MCF 10A (cell line): ENCODE measurements at regions of chr13 and their contacts with region 1.

Region 1: DNA sequence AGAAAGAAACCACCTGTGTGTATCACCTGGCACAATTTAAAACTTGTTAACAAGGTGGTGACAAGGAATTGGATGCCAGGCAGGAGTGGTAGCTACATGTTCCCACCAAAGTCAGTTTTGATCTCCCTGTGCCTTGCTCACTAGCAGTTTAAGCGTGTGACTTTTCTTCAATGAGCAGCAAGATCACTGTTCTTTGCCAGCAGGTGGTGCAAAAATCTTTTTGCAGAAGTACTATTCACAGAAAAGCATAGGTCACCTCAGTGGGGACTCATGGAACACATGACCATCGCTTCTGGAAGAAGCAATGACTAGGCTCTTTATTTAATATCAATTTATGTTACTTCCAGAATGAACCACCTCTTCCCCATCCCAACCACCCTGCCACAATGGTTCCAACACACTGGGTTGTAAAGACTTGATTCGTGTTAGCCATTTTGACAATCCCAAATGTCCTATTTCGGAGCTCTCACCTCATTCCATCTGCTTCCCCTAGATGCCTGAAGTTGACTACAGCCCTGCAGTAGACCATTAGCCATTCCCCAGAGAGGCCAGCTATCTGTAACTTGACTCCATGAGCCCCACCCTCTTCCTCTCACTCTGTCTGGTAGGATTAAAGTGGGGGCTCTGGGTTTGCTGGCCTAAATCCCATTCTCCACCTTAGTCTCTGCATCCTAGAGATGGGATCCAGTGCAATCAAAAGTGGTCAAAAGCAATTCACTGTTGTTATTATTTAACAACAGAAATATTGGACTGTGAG is 59.1 kb upstream of the TNFRSF19 start:
- DNase-seq: peak; percentile 28
- H3K4me3 Mint-ChIP-seq: no peak overlapping the region
- H3K27ac Mint-ChIP-seq: no peak overlapping the region
- H3K4me1 Mint-ChIP-seq: peaks cover 6% of the 10 kb centered on the region
- H3K27me3 Mint-ChIP-seq: peaks cover 25% of the 10 kb centered on the region
- CTCF ChIP-seq: peak; percentile 14

Region 2: GRCh38 chr13:23707674-23708073 is 196.5 kb after region 1 on chr13:
- CTCF ChIA-PET with region 1: no interaction called
- POLR2A ChIA-PET with region 1: no interaction called
- intact Hi-C with region 1: loop called (anchors 1 kb)
- DNase-seq: peak; percentile 26
- H3K4me3 Mint-ChIP-seq: no peak overlapping the region
- H3K27ac Mint-ChIP-seq: no peak overlapping the region
- H3K4me1 Mint-ChIP-seq: no peaks in the 10 kb centered on the region
- H3K27me3 Mint-ChIP-seq: no peaks in the 10 kb centered on the region
- CTCF ChIP-seq: peak; percentile 11